ENCODE measurements at regions of chr20 and their contacts with region 1.

Region 1: GRCh38 chr20:20083807-20084206 is 31.5 kb downstream of the CFAP61 start:
- DNase-seq: peak; percentile 55
- H3K4me3 Mint-ChIP-seq: peak overlapping the region; percentile 66
- H3K27ac Mint-ChIP-seq: no peak overlapping the region
- H3K4me1 Mint-ChIP-seq: peaks cover 4% of the 10 kb centered on the region
- H3K27me3 Mint-ChIP-seq: peaks cover 13% of the 10 kb centered on the region

Region 2: DNA sequence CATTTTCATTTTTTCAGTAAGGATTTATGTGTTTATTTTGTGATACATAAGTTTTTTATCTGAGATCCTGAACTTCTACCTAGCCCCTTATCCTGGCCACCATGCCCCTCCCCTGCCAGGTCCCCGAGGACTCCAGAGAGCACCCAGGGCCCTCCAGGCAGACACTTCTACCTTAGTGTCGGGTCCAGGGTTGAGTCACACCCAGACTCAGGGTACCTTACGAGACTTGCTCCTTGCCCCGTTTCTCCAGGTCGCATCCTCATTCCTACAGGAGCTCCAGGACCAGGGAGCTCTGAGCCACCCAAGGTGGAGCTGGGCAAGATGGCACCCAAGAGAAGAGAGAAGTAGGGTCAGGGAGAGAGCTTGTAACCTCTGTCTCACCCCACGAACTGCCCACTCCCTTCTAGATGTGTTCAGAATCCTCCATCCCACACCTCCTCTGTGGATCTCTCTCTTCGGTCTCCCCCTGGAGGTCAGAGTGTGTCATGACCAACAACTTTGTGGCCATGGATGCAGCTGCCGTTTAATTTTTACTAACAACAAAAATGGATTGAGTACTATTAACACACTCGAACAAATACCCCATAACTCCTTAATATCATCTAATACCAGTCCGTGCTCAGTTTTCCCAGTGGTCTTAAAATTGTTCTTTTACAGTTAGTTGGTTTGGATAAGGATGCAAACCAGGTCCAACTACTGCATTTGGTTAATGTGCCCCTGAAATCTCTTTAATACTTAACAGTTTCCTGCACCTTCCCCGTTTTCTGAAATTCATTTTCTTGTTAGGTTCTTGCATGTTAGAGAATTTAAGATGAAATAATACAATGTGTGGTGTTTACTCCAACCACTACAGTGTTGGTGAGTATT is 153.5 kb after region 1 on chr20:
- intact Hi-C with region 1: loop called (anchors 2 kb)
- DNase-seq: peak; percentile 78
- H3K4me3 Mint-ChIP-seq: no peak overlapping the region
- H3K27ac Mint-ChIP-seq: no peak overlapping the region
- H3K4me1 Mint-ChIP-seq: peaks cover 2% of the 10 kb centered on the region
- H3K27me3 Mint-ChIP-seq: peaks cover 1% of the 10 kb centered on the region

Region 3: DNA sequence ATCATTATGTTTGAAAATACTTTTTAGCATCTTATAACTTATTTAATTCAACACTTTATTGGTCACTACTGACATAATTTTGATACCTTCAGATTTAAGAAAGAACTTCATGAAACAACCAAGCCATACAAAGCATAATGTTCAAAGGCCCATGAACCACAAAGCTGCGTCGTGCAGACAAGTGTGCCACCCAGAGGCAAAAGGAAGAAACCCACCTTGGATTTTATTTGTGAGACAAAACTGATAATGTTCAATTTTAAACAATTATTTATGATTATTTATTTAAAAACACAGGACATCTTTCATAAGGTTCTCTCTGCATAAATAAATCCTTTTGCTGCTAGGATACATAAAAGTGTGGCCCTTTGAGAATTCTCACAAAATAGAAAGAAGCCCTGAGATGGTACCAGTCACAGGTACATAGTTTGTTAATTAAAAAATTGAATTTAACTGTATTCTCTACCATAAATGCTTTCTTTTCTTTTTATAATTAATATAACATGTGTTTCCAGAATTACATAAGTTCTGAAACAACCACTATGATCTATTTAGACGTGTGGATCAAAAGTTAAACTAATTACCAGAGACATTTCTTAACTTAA is 484.9 kb after region 1 on chr20:
- intact Hi-C with region 1: loop called (anchors 1 kb)
- DNase-seq: peak; percentile 73
- H3K4me3 Mint-ChIP-seq: no peak overlapping the region
- H3K27ac Mint-ChIP-seq: no peak overlapping the region
- H3K4me1 Mint-ChIP-seq: peaks cover 12% of the 10 kb centered on the region
- H3K27me3 Mint-ChIP-seq: no peaks in the 10 kb centered on the region

Region 4: DNA sequence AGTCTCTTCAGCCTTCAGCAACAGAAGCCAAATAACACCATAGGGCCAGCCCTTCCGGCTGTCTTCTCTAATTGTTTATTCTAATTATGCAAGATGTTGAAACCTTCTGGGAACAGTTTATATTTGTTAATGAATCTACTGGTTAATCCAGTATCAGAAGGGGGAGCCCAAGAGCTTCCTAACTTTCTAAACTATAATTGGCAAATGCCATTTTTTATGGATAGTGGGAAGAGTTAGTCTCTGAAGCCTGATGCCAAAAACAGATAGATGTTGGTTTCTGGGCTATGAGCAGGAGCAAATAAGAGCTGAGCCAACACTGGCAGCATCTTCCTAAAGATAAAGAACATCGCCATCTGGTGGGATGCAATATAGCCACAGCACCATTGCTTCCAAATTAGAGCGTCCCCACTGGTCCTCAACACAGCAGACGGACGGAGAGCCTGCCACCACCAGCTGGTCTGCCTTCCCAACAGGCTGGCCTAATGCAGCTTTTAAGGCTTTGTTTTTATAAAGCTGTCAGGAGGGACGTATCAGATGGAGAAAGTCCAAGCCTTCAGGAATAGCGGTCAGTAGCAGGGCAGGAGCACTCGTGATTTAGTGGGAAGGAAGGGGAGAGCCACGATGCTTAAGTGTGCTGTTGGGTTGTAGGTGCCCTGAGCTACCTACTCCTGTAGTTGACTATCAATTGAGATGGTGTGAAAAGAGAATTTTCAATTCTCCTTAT is 509.8 kb after region 1 on chr20:
- intact Hi-C with region 1: loop called (anchors 1 kb)
- DNase-seq: peak; percentile 66
- H3K4me3 Mint-ChIP-seq: no peak overlapping the region
- H3K27ac Mint-ChIP-seq: no peak overlapping the region
- H3K4me1 Mint-ChIP-seq: no peaks in the 10 kb centered on the region
- H3K27me3 Mint-ChIP-seq: no peaks in the 10 kb centered on the region

Region 5: GRCh38 chr20:20824924-20825584 is 741.2 kb after region 1 on chr20:
- intact Hi-C with region 1: loop called (anchors 2 kb)
- DNase-seq: peak; percentile 86
- H3K4me3 Mint-ChIP-seq: no peak overlapping the region
- H3K27ac Mint-ChIP-seq: no peak overlapping the region
- H3K4me1 Mint-ChIP-seq: peaks cover 2% of the 10 kb centered on the region
- H3K27me3 Mint-ChIP-seq: peaks cover 16% of the 10 kb centered on the region